Testis (tissue), 5 donors: ENCODE measurements at regions of chr14 and their contacts with region 1.

Region 1: GRCh38 chr14:76784266-76785264 is 23.3 kb downstream of the VASH1 start:
- DNase-seq: peak; percentile 81
- H3K4me3 ChIP-seq: no peak overlapping the region
- H3K27ac ChIP-seq: no peak overlapping the region
- H3K4me1 ChIP-seq: peaks cover 19% of the 10 kb centered on the region
- H3K27me3 ChIP-seq: no peaks in the 10 kb centered on the region
- CTCF ChIP-seq: peak; percentile 69 to 76 (median 75)
- POLR2A ChIP-seq: no peak

Region 2: GRCh38 chr14:76710056-76711010 is 74.2 kb before region 1 on chr14:
- intact Hi-C with region 1: loop called (anchors 5 kb)
- DNase-seq: peak; percentile 54
- H3K4me3 ChIP-seq: no peak overlapping the region
- H3K27ac ChIP-seq: no peak overlapping the region
- H3K4me1 ChIP-seq: peaks cover 7% of the 10 kb centered on the region
- H3K27me3 ChIP-seq: no peaks in the 10 kb centered on the region
- CTCF ChIP-seq: peak; percentile 74 to 90 (median 86)
- POLR2A ChIP-seq: no peak

Region 3: GRCh38 chr14:76918751-76919543 is 134.4 kb after region 1 on chr14:
- intact Hi-C with region 1: no loop called
- DNase-seq: peak; percentile 96
- H3K4me3 ChIP-seq: no peak overlapping the region
- H3K27ac ChIP-seq: peak overlapping the region; percentile 69 to 77
- H3K4me1 ChIP-seq: peaks cover 59% of the 10 kb centered on the region
- H3K27me3 ChIP-seq: no peaks in the 10 kb centered on the region
- CTCF ChIP-seq: no peak
- POLR2A ChIP-seq: no peak